Thyroid gland (tissue), 4 donors: ENCODE measurements at regions of chr2 and their contacts with region 1.

Region 1: GRCh38 chr2:233251306-233252116 is at the start of gene ATG16L1:
- DNase-seq: peak; percentile 97
- H3K4me3 ChIP-seq: peak within 1 kb of the TSS; percentile 72 to 100 (median 95)
- H3K27ac ChIP-seq: peak within 1 kb of the TSS; percentile 72 to 93 (median 84)
- H3K4me1 ChIP-seq: peaks cover 14 to 19% of the 10 kb centered on the region in 2 donors
- H3K27me3 ChIP-seq: no peaks in the 10 kb centered on the region
- CTCF ChIP-seq: peak; percentile 63 to 98 (median 90)
- POLR2A ChIP-seq: peak; percentile 76 to 89
- total RNA-seq, gene ATG16L1: 52.7 to 112 (median 78.9) TPM

Region 2: DNA sequence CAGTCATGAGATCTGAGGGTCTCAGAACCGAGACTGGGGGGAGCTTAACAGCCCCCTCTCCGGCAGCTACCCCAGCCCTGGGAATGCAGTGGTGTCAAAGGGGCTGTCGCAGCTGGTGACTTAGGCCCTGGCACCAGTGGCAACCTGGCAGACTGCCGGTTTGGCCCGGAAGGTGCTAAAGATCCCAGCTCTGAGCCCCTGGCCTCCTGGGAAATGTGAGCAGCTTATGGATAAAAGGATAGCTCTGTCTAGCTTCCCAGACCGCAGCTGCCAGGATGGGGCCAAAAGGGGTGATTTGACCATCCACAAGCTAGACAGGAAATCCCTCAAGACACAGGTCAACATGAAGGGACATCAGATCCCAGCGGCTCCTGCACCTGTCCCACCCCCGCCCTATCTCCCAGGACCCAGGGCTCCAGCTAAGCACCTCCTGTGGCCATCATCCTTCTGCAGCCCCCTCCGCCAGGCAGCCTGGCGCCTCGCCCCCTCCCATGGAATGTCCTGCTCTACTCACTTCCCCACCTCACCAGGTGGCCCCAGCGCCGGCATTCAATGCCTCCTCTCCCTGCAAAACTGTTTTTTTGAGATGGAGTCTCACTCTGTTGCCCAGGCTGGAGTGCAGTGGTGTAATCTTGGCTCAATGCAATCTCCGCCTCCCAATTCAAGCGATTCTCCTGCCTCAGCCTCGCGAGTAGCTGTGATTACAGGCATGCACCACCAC is 651.3 kb before region 1 on chr2:
- intact Hi-C with region 1: loop called (anchors 10 kb)
- DNase-seq: no peak
- H3K4me3 ChIP-seq: no peak overlapping the region
- H3K27ac ChIP-seq: no peak overlapping the region
- H3K4me1 ChIP-seq: no peaks in the 10 kb centered on the region
- H3K27me3 ChIP-seq: no peaks in the 10 kb centered on the region
- CTCF ChIP-seq: no peak
- POLR2A ChIP-seq: no peak

Region 3: GRCh38 chr2:232854082-232854481 is 397.4 kb before region 1 on chr2:
- intact Hi-C with region 1: loop called (anchors 10 kb)
- DNase-seq: peak in 1 of 2 donors; percentile 16
- H3K4me3 ChIP-seq: no peak overlapping the region
- H3K27ac ChIP-seq: no peak overlapping the region
- H3K4me1 ChIP-seq: no peaks in the 10 kb centered on the region
- H3K27me3 ChIP-seq: no peaks in the 10 kb centered on the region
- CTCF ChIP-seq: no peak
- POLR2A ChIP-seq: no peak

Region 4: GRCh38 chr2:233353769-233354499 is 102.4 kb after region 1 on chr2 and contains the start of gene DGKD:
- intact Hi-C with region 1: loop called (anchors 10 kb)
- DNase-seq: peak; percentile 47 to 60
- H3K4me3 ChIP-seq: peak within 1 kb of the TSS; percentile 27 to 53 (median 47)
- H3K27ac ChIP-seq: peak within 1 kb of the TSS in 2 of 3 donors; percentile 17 to 68
- H3K4me1 ChIP-seq: peaks cover 15 to 34% of the 10 kb centered on the region in 2 donors
- H3K27me3 ChIP-seq: no peaks in the 10 kb centered on the region
- CTCF ChIP-seq: peak in 2 of 6 experiments; percentile 19 to 79
- POLR2A ChIP-seq: no peak
- total RNA-seq, gene DGKD: 22.3 to 71.7 (median 27.3) TPM